Sigmoid colon (tissue), 7 donors: ENCODE measurements at regions of chr9 and their contacts with region 1.

Region 1: DNA sequence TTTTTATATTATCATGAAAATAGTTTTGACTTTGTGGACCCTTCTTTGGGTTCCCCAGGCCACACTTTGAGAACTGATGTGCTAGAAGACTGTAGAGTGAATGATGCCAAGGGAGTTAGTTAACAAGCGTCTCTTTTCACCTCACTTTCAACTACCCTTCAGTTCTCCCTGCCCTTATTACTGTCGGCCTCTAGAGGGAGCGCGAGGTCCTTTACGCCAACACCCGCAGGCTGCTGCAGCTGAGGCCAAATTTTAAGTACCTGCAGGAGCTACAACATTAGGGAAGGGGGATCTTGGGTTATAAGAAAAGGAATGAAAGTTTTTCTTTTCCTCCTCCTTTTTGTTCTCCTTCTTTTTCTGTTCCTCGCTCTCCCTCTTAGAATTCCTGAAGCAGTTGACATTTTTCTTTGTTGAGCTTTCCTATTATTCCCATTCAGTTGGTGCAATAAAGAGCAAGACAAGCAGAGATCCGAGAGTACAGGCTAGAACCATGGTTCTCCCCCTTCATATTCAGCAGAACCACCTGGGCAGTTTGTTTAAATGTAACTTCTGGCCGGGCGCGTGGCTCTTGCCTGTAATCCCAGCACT is 84.0 kb downstream of the ZFAND5 start:
- DNase-seq: peak; percentile 86
- H3K4me3 ChIP-seq: no peak overlapping the region
- H3K27ac ChIP-seq: no peak overlapping the region
- H3K4me1 ChIP-seq: no peaks in the 10 kb centered on the region
- H3K27me3 ChIP-seq: no peaks in the 10 kb centered on the region
- CTCF ChIP-seq: peak; percentile 83 to 94 (median 87)
- EP300 ChIP-seq: no peak
- POLR2A ChIP-seq: no peak

Region 2: DNA sequence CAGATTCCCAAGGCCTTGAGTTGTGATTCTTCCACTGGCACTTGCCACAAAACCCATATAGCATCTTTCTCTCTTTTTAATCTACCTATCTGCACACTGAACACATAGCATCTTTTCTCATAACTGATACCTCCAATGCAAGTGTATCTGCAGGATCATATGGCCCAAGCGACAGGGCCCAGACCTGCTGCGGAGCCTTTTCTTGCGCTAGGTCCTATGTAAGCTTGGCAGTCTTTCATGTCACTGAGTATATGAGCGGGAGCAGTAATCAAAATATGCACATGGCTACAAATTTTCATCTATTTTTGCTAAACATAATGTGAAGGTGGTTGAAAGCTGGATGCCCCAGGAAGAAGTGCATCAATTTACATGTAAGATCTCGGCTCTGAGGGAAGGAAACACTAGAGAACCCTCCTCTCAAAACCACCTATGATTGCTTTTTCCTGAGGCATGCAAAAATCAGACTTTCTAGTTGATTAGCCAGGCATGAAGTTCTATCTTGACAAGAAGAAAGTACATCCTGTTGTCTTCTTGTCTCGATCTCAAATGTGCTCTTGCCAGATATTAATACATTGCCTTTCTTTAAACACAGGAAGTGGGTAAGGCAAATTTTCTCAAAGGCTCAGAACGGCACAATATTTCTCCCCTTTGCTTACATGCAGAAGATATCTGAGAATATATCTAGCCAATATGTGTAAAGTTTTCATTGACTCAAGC is 485.8 kb before region 1 on chr9:
- intact Hi-C with region 1: no loop called
- DNase-seq: no peak
- H3K4me3 ChIP-seq: no peak overlapping the region
- H3K27ac ChIP-seq: no peak overlapping the region
- H3K4me1 ChIP-seq: no peaks in the 10 kb centered on the region
- H3K27me3 ChIP-seq: no peaks in the 10 kb centered on the region
- CTCF ChIP-seq: no peak
- EP300 ChIP-seq: no peak
- POLR2A ChIP-seq: no peak

Region 3: DNA sequence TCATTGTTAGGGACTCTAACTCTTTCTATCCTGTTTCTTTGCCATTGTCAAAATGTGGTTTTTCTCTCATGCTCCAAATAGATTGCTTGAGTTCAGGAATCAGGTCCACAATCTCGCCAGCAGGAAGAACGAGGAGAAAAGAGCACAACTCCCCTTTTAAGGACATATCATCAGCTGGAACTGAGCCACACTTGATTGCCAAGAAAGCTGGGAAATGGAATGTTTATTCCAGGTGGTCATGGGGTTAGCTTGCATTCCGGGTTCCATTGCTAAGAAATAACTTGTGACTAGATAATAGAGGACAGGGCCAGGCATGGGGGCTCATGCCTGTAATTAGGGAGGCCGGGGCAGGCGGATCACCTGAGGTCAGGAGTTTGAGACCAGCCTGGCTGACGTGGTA is 188.2 kb before region 1 on chr9:
- intact Hi-C with region 1: no loop called
- DNase-seq: no peak
- H3K4me3 ChIP-seq: no peak overlapping the region
- H3K27ac ChIP-seq: no peak overlapping the region
- H3K4me1 ChIP-seq: no peaks in the 10 kb centered on the region
- H3K27me3 ChIP-seq: no peaks in the 10 kb centered on the region
- CTCF ChIP-seq: no peak
- EP300 ChIP-seq: no peak
- POLR2A ChIP-seq: no peak

Region 4: GRCh38 chr9:72753266-72753893 is 472.4 kb after region 1 on chr9:
- intact Hi-C with region 1: loop called (anchors 5 kb)
- DNase-seq: no peak
- H3K4me3 ChIP-seq: no peak overlapping the region
- H3K27ac ChIP-seq: no peak overlapping the region
- H3K4me1 ChIP-seq: no peaks in the 10 kb centered on the region
- H3K27me3 ChIP-seq: no peaks in the 10 kb centered on the region
- CTCF ChIP-seq: peak in 1 of 4 experiments; percentile 22
- EP300 ChIP-seq: no peak
- POLR2A ChIP-seq: no peak

Region 5: GRCh38 chr9:72823971-72824370 is 543.0 kb after region 1 on chr9:
- intact Hi-C with region 1: loop called (anchors 5 kb)
- DNase-seq: no peak
- H3K4me3 ChIP-seq: no peak overlapping the region
- H3K27ac ChIP-seq: no peak overlapping the region
- H3K4me1 ChIP-seq: peaks cover 0 to 4% (median 0%) of the 10 kb centered on the region in 4 donors
- H3K27me3 ChIP-seq: no peaks in the 10 kb centered on the region
- CTCF ChIP-seq: no peak
- EP300 ChIP-seq: no peak
- POLR2A ChIP-seq: no peak